ENCODE measurements at regions of chr2 and their contacts with region 1.

Region 1: GRCh38 chr2:68832233-68832869 is 38.8 kb downstream of the BMP10 start:
- DNase-seq: peak; percentile 64 to 66
- ATAC-seq: peak; percentile 77 to 87 (median 78)
- H3K4me3 ChIP-seq: no peak overlapping the region
- H3K27ac ChIP-seq: peak overlapping the region; percentile 78
- H3K4me1 ChIP-seq: peaks cover 28% of the 10 kb centered on the region
- H3K27me3 ChIP-seq: no peaks in the 10 kb centered on the region
- CTCF ChIP-seq: no peak

Region 2: GRCh38 chr2:68751397-68752339 is 80.7 kb before region 1 on chr2:
- intact Hi-C with region 1: loop called in 1 of 2 experiments (anchors 5 kb)
- DNase-seq: peak; percentile 86 to 92
- ATAC-seq: peak; percentile 83 to 99 (median 92)
- H3K4me3 ChIP-seq: peak overlapping the region; percentile 31
- H3K27ac ChIP-seq: no peak overlapping the region
- H3K4me1 ChIP-seq: no peaks in the 10 kb centered on the region
- H3K27me3 ChIP-seq: no peaks in the 10 kb centered on the region
- CTCF ChIP-seq: peak; percentile 89

Region 3: DNA sequence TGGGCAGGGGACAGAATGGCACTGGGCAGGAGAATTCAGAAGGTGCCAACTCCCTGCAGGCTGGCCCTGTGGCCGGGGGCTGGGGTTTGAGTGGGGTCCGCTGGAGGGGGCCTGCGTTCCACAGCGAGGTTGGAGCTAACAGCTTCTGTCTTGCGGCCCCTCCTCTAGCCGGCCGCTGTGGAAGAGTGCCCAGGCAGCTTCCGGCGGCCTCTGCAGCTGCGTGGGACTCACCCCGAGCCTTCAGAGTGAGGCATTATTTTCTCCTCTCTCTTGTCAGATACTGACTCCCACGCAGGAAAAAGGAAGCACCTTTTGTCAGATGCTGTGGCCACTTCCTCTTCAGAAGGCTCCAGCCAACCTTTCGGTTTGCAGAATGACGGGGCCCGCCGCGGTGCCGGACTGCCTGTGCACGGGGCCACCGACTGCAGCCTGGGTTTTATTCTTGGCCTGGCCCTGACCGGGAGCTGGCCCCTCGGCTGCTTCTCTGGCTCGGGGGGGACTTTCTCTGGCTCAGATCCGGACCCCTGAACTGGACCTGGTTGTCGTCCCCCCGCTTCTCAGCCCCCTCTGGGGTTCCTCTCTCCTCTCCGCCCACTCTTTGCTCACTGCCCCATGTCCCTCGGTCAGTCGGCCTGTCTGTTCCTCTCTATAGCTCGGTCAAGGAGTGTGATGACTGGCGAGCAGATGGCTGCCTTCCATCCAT is 57.6 kb before region 1 on chr2:
- intact Hi-C with region 1: loop called in 1 of 2 experiments (anchors 5 kb)
- DNase-seq: peak; percentile 61 to 75
- ATAC-seq: peak; percentile 37 to 73 (median 53)
- H3K4me3 ChIP-seq: peak overlapping the region; percentile 57
- H3K27ac ChIP-seq: peak overlapping the region; percentile 69
- H3K4me1 ChIP-seq: peaks cover 7% of the 10 kb centered on the region
- H3K27me3 ChIP-seq: no peaks in the 10 kb centered on the region
- CTCF ChIP-seq: no peak

Region 4: DNA sequence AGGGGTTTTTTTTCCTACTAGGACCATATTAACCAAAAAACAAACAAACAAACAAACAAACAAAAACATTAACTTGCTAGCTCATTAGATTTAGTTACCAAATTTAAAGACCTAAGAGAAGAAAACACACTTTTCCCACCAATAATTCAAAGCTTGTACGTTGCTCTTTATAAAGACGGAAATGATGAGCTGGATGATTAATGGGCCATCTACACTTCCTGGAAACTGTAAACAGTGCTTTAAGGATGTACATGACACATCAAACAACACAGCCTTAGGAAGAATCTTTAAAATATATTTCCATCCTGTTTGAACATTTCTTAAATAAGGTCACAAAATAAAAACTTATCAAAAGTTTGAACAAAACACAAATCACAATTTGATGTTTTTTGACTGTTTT is 37.9 kb after region 1 on chr2:
- intact Hi-C with region 1: no loop called
- DNase-seq: no peak
- ATAC-seq: no peak
- H3K4me3 ChIP-seq: no peak overlapping the region
- H3K27ac ChIP-seq: no peak overlapping the region
- H3K4me1 ChIP-seq: no peaks in the 10 kb centered on the region
- H3K27me3 ChIP-seq: no peaks in the 10 kb centered on the region
- CTCF ChIP-seq: no peak